MCF 10A (cell line): ENCODE measurements at regions of chr16 and their contacts with region 1.

Region 1: DNA sequence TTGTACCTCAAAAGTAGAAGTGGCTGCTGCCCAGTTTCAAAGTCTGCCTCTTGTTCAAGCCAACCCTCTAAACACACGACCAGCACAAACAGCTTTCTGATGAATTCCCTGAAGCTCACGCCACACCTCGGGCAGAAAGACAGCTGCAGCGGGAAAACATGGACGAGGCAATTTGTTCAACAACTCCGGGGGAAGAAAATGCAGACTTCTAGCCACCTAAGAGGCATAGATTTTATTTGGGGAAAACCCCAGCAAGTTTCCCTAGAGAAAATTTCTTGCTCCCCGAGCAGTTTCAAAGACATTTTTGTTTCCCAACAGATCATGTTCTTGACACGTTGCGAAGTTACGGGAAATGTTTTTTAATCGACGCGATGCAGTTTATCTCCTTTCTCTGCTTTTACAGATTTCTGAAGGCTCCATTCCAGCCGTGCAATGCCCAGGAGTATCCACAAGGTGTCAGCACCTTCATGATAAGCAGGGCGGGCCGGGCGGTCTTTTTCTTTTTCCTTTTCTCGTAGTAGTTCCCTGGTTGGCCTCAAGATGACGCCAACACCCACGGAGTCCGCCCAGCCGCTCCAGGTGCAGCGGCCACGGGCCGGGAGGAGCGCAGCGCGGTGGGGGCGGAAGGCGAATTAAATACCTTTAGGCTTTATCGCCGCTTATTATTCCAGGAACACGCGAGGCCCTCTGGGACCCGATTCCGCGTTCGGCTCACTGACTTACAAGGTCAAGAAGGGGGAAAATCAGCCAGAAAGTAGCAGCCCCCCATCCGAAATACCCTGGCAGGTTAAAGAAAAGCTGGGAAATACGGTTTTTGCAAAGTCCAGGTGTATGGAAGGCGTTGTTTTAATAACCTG is 2.9 kb upstream of the FOXC2 start:
- DNase-seq: peak; percentile 88
- H3K4me3 Mint-ChIP-seq: peak overlapping the region; percentile 67
- H3K27ac Mint-ChIP-seq: peak overlapping the region; percentile 23
- H3K4me1 Mint-ChIP-seq: peaks cover 10% of the 10 kb centered on the region
- H3K27me3 Mint-ChIP-seq: no peaks in the 10 kb centered on the region
- CTCF ChIP-seq: peak; percentile 100

Region 2: GRCh38 chr16:86664533-86665318 is 101.0 kb after region 1 on chr16:
- CTCF ChIA-PET with region 1: interaction called, 3 read pairs
- POLR2A ChIA-PET with region 1: interaction called, 42 read pairs
- intact Hi-C with region 1: no loop called
- DNase-seq: peak; percentile 98
- H3K4me3 Mint-ChIP-seq: peak overlapping the region; percentile 66
- H3K27ac Mint-ChIP-seq: peak overlapping the region; percentile 98
- H3K4me1 Mint-ChIP-seq: peaks cover 47% of the 10 kb centered on the region
- H3K27me3 Mint-ChIP-seq: no peaks in the 10 kb centered on the region
- CTCF ChIP-seq: no peak

Region 3: DNA sequence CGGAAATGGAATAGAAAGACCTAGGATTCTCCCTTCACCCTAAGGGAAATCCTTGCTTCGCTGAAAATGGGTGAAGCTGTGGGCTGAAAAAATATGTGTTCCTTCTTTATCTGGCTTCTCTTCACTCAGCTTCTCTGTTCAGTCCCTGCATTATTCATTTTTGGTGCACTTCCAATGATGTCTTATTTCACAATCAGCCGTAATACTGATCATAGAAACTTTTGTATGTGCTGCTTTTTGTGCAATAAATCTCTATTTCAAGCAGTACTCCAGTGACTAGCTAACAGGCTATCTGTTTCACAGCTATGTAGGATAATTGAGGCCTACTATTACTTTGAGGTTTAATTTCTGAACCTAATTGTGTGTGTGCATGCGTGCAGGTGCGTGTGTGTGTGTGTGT is 159.3 kb after region 1 on chr16:
- CTCF ChIA-PET with region 1: no interaction called
- POLR2A ChIA-PET with region 1: no interaction called
- intact Hi-C with region 1: no loop called
- DNase-seq: peak; percentile 39
- H3K4me3 Mint-ChIP-seq: no peak overlapping the region
- H3K27ac Mint-ChIP-seq: peak overlapping the region; percentile 49
- H3K4me1 Mint-ChIP-seq: peaks cover 18% of the 10 kb centered on the region
- H3K27me3 Mint-ChIP-seq: peaks cover 9% of the 10 kb centered on the region
- CTCF ChIP-seq: no peak

Region 4: DNA sequence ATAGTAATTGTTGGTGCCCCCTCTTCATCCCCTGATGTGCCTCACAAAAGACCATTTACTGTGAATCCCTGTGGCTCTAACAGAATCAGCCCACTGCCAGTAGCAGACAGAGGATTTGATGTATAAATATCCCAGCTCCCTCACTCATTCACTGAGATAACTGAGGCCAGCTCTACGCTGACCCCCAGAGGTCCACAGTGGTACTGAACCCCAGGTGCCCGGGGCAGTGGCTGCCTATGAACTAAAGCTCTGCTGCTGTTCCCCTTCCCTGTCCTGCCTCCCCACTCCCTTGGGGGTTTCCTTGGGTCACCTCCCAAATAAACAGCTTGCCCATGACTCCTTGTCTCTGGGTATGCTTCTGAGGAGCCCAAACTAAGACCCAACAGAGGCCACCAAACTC is 310.4 kb after region 1 on chr16:
- CTCF ChIA-PET with region 1: interaction called, 3 read pairs
- POLR2A ChIA-PET with region 1: no interaction called
- intact Hi-C with region 1: loop called (anchors 5 kb)
- DNase-seq: peak; percentile 61
- H3K4me3 Mint-ChIP-seq: no peak overlapping the region
- H3K27ac Mint-ChIP-seq: no peak overlapping the region
- H3K4me1 Mint-ChIP-seq: peaks cover 10% of the 10 kb centered on the region
- H3K27me3 Mint-ChIP-seq: peaks cover 17% of the 10 kb centered on the region
- CTCF ChIP-seq: peak; percentile 34

Region 5: DNA sequence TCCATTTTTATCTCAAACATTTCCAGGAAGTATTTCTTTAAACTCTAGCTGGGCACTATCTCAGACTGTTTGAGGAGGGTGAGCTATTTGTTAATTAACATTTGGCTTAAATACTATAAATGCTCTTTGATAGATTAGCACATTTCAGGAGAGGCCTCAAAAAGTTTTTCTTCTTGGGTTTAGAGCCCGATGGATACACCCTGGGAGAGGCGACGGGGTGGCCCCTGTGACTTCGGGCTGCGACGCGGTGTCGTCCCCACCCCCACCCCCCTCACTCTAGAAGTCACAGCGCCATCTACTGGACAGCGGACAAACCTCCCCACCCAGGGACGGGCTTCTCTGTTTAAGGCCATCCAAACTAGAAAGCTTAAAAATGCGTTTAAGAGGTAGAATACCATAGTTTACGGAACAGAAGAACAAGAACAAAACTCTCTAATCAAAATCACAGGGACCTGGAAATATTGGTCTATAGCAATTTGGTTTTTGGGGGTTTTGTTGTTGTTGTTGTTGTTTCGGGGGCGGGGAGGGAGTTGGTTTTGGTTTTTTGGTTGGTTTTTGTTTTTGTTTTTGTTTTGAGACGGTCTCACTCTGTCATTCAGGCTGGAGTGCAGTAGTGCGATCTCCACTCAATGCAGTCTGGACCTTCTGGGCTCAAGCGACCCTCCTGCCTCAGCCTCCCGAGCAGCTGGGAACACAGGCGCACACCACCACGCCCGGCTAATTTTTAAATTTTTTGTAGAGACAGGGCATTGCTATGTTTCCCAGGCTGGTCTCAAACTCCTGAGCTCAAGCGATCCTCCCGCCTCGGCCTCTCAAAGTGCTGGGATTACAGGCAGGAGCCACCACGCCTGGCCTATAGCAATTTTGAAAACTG is 499.1 kb after region 1 on chr16:
- CTCF ChIA-PET with region 1: interaction called, 88 read pairs
- POLR2A ChIA-PET with region 1: interaction called, 13 read pairs
- intact Hi-C with region 1: loop called (anchors 1 kb)
- DNase-seq: peak; percentile 77
- H3K4me3 Mint-ChIP-seq: peak overlapping the region; percentile 53
- H3K27ac Mint-ChIP-seq: no peak overlapping the region
- H3K4me1 Mint-ChIP-seq: no peaks in the 10 kb centered on the region
- H3K27me3 Mint-ChIP-seq: no peaks in the 10 kb centered on the region
- CTCF ChIP-seq: peak; percentile 84

Region 6: DNA sequence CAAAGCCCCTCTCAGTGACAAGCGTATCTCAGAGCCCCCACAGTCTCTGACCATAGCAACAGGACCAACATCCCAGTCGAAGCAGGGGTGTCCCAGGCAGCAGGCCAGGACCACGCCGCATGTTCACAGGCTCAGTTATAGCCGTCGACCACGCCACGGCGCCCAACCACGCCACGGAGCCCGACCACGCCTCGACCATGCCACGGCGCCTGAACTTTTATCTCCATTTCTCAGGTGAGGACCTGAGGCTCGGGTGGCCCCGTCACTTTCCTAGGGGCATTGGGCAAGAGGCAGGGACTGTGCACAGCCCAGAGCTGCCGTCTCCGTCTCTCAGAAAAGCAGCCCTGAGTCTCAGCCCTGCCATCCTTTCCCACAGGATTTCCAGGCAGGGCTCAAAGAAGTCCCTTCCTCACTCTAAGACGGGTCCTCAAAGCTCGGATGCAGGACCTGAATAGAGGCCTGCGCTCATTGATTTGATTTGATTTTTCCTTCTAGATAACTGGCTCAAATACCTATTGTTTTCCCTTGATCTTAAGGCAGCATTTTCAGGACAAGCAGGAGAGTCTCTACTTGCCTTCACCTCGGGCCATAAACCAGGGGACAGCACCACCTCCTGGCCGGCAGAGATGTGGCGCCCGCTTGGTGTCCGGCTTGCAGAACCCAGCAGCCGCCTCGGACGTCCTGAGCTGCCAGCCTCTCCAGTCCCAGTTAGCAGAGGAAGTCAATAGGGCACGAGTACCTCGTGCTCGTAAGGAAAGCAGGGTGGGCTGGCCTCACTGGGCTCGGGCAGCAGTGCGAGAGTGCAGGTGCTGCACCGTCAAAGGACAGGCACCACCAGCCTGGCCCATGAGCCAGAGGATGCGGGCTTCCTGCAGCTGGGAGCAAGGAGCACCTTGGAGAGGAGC is 714.7 kb after region 1 on chr16:
- CTCF ChIA-PET with region 1: interaction called, 77 read pairs
- POLR2A ChIA-PET with region 1: interaction called, 6 read pairs
- intact Hi-C with region 1: loop called (anchors 1 kb)
- DNase-seq: peak; percentile 77
- H3K4me3 Mint-ChIP-seq: no peak overlapping the region
- H3K27ac Mint-ChIP-seq: no peak overlapping the region
- H3K4me1 Mint-ChIP-seq: peaks cover 13% of the 10 kb centered on the region
- H3K27me3 Mint-ChIP-seq: peaks cover 40% of the 10 kb centered on the region
- CTCF ChIP-seq: peak; percentile 86

Region 7: GRCh38 chr16:87407511-87408112 is 843.9 kb after region 1 on chr16:
- CTCF ChIA-PET with region 1: interaction called, 4 read pairs
- POLR2A ChIA-PET with region 1: no interaction called
- intact Hi-C with region 1: loop called (anchors 10 kb)
- DNase-seq: peak; percentile 94
- H3K4me3 Mint-ChIP-seq: no peak overlapping the region
- H3K27ac Mint-ChIP-seq: peak overlapping the region; percentile 43
- H3K4me1 Mint-ChIP-seq: peaks cover 14% of the 10 kb centered on the region
- H3K27me3 Mint-ChIP-seq: no peaks in the 10 kb centered on the region
- CTCF ChIP-seq: no peak